ENCODE measurements at regions of chr20 and their contacts with region 1.

Region 1: GRCh38 chr20:18412221-18412901 is 54.5 kb downstream of the DZANK1 start:
- DNase-seq: no peak
- H3K4me3 Mint-ChIP-seq: no peak overlapping the region
- H3K27ac Mint-ChIP-seq: no peak overlapping the region
- H3K4me1 Mint-ChIP-seq: peaks cover 4% of the 10 kb centered on the region
- H3K27me3 Mint-ChIP-seq: peaks cover 2% of the 10 kb centered on the region

Region 2: DNA sequence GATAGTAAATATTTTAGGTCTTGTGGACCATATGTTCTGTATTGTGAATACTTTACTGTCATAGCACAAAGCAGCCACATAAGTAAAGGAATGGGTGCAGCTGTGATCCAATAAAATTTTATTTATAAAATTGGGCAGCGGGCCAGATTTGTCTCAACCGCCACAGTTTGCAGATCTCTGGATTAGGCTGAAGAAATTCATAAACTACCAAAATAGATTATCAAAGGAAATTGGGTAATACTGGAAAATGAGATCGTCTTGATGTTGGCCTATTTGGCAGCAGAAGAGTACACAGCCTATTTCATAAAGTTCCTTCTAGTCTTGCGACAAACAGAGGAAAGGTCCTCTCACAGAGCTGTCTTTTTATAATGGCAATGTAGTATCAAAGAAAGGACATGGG is 15.3 kb before region 1 on chr20:
- CTCF ChIA-PET with region 1: no interaction called
- intact Hi-C with region 1: no loop called
- DNase-seq: no peak
- H3K4me3 Mint-ChIP-seq: no peak overlapping the region
- H3K27ac Mint-ChIP-seq: no peak overlapping the region
- H3K4me1 Mint-ChIP-seq: no peaks in the 10 kb centered on the region
- H3K27me3 Mint-ChIP-seq: no peaks in the 10 kb centered on the region

Region 3: DNA sequence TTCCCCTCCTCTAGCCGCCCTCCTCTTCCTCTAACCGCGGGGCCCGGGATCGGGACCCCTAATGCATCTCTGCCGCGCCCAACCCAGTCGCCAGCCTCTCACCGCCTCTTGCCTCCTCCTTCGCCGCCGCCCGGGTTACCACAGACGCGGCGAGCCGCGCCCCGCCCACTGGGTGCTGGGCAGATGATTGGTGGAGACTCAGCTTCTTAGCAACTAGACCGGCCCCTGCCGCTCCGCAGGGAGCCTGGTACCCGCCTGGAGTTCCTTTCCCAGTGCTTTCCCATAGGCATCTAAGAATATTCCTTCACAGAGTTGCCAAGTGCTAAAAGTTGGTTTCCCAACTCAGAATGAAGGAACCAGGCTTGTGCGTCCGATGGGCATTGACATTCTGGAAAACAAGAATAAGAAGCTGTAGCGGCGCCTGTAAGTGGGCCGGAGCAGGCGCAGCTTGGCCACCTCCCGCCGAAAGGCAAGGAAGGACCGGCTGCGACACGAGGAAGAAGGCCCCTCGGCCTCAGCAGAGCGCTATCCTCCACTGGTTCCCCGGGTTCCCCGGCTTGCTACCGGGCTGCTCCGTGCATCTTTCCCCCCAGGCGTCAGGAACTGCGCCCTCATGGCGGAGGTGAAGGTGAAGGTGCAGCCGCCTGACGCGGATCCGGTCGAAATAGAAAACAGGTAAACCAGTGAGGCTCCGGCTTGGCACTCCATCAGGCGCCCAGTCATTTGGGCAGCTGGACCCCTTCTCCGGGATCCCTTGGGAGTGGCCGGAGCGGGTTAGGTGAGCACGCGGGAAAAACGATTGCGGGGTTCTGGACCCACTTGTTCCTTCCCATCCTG is 54.8 kb after region 1 on chr20 and contains the starts of genes DZANK1 and POLR3F:
- CTCF ChIA-PET with region 1: interaction called, 4 read pairs
- intact Hi-C with region 1: loop called (anchors 1 kb)
- DNase-seq: peak; percentile 94
- H3K4me3 Mint-ChIP-seq: peak within 1 kb of the TSS; percentile 92
- H3K27ac Mint-ChIP-seq: peak within 1 kb of the TSS; percentile 84
- H3K4me1 Mint-ChIP-seq: peaks cover 32% of the 10 kb centered on the region
- H3K27me3 Mint-ChIP-seq: no peaks in the 10 kb centered on the region
- total RNA-seq, gene DZANK1: 0.79 to 0.94 TPM
- total RNA-seq, gene POLR3F: 7.0 to 8.3 TPM

Region 4: DNA sequence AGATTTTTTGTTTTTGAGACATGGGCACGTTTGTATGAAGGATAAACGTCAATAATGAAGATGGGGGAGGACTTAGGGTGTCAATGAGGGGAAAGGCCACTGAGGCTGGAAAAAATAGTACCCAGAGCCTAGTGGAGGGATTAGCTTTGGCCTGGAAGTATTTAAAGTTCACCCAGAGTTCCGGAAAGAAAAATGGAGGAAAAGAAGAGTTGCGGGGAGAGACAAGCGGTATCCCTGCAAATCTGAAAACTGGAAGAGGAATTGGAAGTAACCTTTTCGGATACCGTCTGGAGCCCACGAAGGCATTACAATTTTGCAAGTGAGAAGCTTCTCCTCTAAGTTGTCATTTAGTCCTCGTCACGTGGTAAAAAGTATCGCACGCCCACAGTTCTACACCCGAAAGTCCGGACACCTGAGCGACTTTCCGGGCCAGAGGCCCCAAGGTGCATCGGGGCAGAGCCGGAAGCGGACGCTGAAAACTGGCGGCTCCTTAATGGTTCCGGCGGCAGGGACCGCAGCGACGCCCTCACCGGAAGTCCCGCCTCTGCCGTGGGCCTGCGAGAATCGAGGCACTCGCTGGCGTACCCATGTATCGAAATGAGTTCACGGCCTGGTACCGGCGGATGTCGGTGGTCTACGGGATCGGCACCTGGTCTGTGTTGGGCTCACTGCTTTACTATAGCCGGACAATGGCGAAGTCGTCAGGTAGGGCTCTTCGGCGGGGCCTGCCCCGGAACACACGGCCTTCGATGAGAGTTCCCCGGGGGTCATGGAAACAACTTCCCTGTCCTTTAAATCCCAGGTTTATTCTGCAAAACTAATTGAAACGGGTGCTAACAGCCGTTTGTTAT is 154.8 kb after region 1 on chr20 and contains the start of gene SMIM26:
- CTCF ChIA-PET with region 1: no interaction called
- intact Hi-C with region 1: loop called (anchors 1 kb)
- DNase-seq: peak; percentile 95
- H3K4me3 Mint-ChIP-seq: peak within 1 kb of the TSS; percentile 94
- H3K27ac Mint-ChIP-seq: peak within 1 kb of the TSS; percentile 95
- H3K4me1 Mint-ChIP-seq: peaks cover 19% of the 10 kb centered on the region
- H3K27me3 Mint-ChIP-seq: no peaks in the 10 kb centered on the region
- total RNA-seq, gene SMIM26: 57.3 to 60.0 TPM

Region 5: GRCh38 chr20:18793625-18794427 is 381.5 kb after region 1 on chr20:
- CTCF ChIA-PET with region 1: no interaction called
- intact Hi-C with region 1: loop called (anchors 1 kb)
- DNase-seq: peak; percentile 93
- H3K4me3 Mint-ChIP-seq: peak overlapping the region; percentile 91
- H3K27ac Mint-ChIP-seq: peak overlapping the region; percentile 94
- H3K4me1 Mint-ChIP-seq: peaks cover 12% of the 10 kb centered on the region
- H3K27me3 Mint-ChIP-seq: peaks cover 8% of the 10 kb centered on the region

Region 6: GRCh38 chr20:19205977-19206396 is 793.6 kb after region 1 on chr20:
- CTCF ChIA-PET with region 1: no interaction called
- intact Hi-C with region 1: loop called (anchors 1 kb)
- DNase-seq: peak; percentile 76
- H3K4me3 Mint-ChIP-seq: no peak overlapping the region
- H3K27ac Mint-ChIP-seq: no peak overlapping the region
- H3K4me1 Mint-ChIP-seq: no peaks in the 10 kb centered on the region
- H3K27me3 Mint-ChIP-seq: peaks cover 33% of the 10 kb centered on the region